GM10248 (cell line): ENCODE measurements at regions of chr6 and their contacts with region 1.

Region 1: GRCh38 chr6:73739096-73739495 is 43.1 kb downstream of the CD109 start:
- DNase-seq: peak; percentile 46
- CTCF ChIP-seq: peak; percentile 75

Region 2: GRCh38 chr6:73790574-73790973 is 51.5 kb after region 1 on chr6:
- CTCF ChIA-PET with region 1: interaction called, 10 read pairs
- POLR2A ChIA-PET with region 1: no interaction called
- DNase-seq: no peak
- CTCF ChIP-seq: no peak